BJ (cell line): ENCODE measurements at regions of chr15 and their contacts with region 1.

Region 1: GRCh38 chr15:78108299-78109084 is 16.1 kb downstream of the SH2D7 start:
- DNase-seq: no peak
- H3K4me3 ChIP-seq: no peak overlapping the region
- H3K27me3 ChIP-seq: no peaks in the 10 kb centered on the region
- CTCF ChIP-seq: peak; percentile 97

Region 2: DNA sequence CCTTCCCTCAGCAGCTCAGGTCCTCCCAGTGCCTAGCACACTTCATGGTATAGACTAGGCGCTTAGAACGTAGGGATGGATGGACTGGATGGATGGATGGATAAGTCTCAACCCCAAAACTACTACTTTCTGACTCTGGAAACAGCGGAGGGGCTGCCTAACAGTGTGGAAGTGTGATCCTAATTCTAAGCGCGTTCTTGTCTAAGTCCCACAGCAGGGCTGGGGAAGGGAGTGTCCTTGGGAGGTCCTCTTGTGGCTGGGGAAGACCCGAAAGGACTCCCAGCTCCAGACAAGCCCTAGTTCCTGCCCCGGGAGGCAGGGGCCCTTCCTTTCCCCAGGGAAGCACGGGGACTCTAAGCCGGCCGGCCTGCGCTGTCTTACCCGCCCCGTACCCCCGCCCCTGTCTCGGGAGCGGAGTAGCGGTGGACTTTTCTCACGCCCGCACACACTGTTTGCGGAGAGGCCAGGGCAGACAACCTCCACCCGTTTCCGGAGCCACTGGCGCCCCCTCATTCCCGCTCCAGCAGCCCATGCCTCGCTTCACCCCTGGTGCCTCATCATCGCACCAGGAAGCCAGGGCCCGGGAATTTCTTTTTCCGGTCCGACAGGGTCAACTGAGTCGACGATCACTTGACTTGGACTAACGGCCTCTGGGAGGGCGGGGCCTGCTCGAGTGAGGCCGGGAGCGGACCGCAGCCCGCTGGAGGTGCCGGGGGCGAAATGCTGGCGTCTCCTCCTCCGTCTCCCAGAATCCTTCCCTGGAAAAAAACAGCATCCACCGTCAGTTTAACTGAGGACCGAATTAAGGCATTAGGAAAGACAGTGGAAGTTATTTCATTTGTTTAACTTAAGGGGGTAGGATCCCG is 164.3 kb before region 1 on chr15:
- CTCF ChIA-PET with region 1: interaction called, 12 read pairs
- POLR2A ChIA-PET with region 1: no interaction called
- DNase-seq: peak; percentile 37
- H3K4me3 ChIP-seq: peak overlapping the region; percentile 39
- H3K27me3 ChIP-seq: no peaks in the 10 kb centered on the region
- CTCF ChIP-seq: no peak

Region 3: GRCh38 chr15:77966540-77967290 is 141.8 kb before region 1 on chr15:
- CTCF ChIA-PET with region 1: interaction called, 282 read pairs
- POLR2A ChIA-PET with region 1: no interaction called
- DNase-seq: no peak
- H3K4me3 ChIP-seq: no peak overlapping the region
- H3K27me3 ChIP-seq: peaks cover 4% of the 10 kb centered on the region
- CTCF ChIP-seq: peak; percentile 88

Region 4: GRCh38 chr15:77992356-77993222 is 115.9 kb before region 1 on chr15:
- CTCF ChIA-PET with region 1: interaction called, 12 read pairs
- POLR2A ChIA-PET with region 1: no interaction called
- DNase-seq: no peak
- H3K4me3 ChIP-seq: no peak overlapping the region
- H3K27me3 ChIP-seq: no peaks in the 10 kb centered on the region
- CTCF ChIP-seq: no peak

Region 5: DNA sequence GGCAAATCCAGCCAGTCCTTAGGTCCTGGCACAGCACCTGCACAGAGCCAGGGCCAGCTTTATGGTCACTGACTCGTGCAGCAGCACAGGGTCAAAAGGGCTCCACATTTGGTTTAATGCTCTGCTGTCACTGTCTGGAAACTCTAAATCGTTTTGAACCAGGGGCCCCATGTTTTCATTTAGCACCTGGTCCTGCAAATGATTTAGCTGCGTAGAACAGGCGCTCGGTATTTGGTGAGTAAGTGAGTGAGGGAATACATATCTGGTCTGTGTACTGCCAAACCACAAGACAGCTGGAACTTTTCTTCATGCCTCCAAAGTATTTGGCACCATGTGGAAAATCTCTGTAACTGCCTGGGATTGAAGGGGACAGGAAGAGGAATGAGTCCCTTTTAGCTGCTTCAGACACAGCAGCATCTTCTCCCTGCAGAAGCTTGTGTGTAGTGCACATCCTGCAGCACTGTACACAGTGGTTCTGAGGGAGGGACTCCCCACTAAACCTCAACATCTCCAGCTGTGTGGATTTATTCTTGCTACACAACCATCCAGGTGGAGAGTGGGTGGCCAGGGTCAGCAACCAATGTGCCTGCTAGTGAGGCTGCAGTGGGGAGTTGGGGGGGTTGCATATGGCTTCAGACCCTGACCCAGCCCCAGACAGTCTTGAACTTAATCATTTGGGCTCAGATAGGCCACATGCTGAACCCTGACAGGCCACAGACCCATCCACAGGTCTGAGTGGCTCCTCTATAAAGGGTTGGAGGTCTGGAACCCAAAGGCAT is 15.1 kb before region 1 on chr15:
- CTCF ChIA-PET with region 1: interaction called, 23 read pairs
- POLR2A ChIA-PET with region 1: no interaction called
- DNase-seq: peak; percentile 75
- H3K4me3 ChIP-seq: no peak overlapping the region
- H3K27me3 ChIP-seq: peaks cover 10% of the 10 kb centered on the region
- CTCF ChIP-seq: no peak; the same call in 1 of the 2 replicates

Region 6: DNA sequence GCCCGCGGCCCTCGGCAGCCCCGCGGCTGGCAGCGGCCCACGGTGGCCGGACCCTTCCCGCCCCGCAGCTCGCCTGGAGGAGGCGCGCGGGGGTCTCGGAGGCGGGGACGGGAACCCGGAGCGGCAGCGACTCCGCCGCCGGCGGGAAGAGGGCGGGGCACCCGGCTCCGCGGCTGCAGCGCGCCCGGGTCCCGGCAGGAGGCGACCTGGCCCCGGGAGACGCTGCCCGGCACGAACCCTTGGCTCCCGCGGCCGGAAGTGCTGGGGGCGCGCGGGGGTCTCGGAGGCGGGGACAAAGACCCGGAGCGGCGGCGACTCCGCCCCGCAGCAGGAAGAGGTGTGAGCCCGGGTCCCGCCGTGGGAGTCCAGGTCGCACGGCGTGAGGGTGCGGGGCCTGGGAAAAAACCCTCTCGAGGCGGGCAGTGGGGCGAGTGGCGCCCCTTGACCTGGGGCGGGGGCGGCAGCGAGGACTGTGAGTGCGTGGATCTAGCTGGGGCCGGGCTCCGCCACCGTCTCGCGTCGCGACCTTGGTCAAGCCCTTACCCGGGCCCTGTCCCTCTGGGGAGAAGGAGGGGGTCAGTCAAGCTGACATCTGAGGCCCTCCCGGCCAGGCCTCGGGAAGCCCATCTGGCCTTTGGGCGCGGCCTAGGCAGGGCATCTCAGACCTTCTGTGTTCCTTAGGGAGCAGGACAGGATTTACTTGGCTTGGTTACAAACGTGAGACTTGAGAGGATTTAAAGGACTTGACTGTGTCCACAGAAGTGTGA is 23.0 kb after region 1 on chr15 and contains the start of gene CIB2:
- CTCF ChIA-PET with region 1: interaction called, 13 read pairs
- POLR2A ChIA-PET with region 1: no interaction called
- DNase-seq: no peak
- H3K4me3 ChIP-seq: peak within 1 kb of the TSS; percentile 66
- H3K27me3 ChIP-seq: no peaks in the 10 kb centered on the region
- CTCF ChIP-seq: peak; percentile 28; the same call in 1 of the 2 replicates
- polyA plus RNA-seq, gene CIB2: 4.5 and 7.4 TPM in 2 replicates

Region 7: DNA sequence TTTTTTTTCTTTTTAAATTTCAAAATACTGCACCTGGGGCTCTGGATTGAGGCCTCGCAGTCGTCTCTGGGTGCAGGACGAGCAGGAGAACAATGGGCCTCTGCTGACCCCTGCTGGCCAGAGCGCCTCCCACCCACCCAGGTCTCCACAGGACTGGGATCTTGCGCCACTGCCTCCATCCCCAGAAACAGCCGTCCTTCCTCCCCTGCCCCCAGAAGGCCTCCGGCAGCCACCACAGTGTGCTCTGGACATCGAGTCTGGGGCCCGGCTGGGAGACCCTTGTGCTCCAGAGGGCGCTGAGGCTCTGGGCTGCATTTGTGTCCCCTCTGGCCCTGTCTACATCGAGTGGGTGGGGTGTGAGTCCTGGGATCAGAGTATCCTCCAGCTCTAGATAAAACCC is 132.5 kb after region 1 on chr15:
- CTCF ChIA-PET with region 1: interaction called, 177 read pairs
- POLR2A ChIA-PET with region 1: no interaction called
- DNase-seq: no peak
- H3K4me3 ChIP-seq: no peak overlapping the region
- H3K27me3 ChIP-seq: peaks cover 3% of the 10 kb centered on the region
- CTCF ChIP-seq: peak; percentile 93

Region 8: GRCh38 chr15:78291716-78292115 is 183.2 kb after region 1 on chr15:
- CTCF ChIA-PET with region 1: no interaction called
- POLR2A ChIA-PET with region 1: no interaction called
- DNase-seq: no peak
- H3K4me3 ChIP-seq: no peak overlapping the region
- H3K27me3 ChIP-seq: no peaks in the 10 kb centered on the region
- CTCF ChIP-seq: no peak